ENCODE measurements at regions of chr4 and their contacts with region 1.

Region 1: GRCh38 chr4:76526585-76526990 is 91.6 kb downstream of the SHROOM3 start:
- DNase-seq: no peak
- ATAC-seq: peak; percentile 71 to 96 (median 93)
- H3K4me3 ChIP-seq: no peak overlapping the region
- H3K27ac ChIP-seq: peak overlapping the region in 9 of 10 donors; percentile 60 to 79 (median 74)
- H3K4me1 ChIP-seq: peaks cover 0 to 30% (median 6%) of the 10 kb centered on the region in 9 donors
- H3K27me3 ChIP-seq: no peaks in the 10 kb centered on the region
- CTCF ChIP-seq: no peak

Region 2: DNA sequence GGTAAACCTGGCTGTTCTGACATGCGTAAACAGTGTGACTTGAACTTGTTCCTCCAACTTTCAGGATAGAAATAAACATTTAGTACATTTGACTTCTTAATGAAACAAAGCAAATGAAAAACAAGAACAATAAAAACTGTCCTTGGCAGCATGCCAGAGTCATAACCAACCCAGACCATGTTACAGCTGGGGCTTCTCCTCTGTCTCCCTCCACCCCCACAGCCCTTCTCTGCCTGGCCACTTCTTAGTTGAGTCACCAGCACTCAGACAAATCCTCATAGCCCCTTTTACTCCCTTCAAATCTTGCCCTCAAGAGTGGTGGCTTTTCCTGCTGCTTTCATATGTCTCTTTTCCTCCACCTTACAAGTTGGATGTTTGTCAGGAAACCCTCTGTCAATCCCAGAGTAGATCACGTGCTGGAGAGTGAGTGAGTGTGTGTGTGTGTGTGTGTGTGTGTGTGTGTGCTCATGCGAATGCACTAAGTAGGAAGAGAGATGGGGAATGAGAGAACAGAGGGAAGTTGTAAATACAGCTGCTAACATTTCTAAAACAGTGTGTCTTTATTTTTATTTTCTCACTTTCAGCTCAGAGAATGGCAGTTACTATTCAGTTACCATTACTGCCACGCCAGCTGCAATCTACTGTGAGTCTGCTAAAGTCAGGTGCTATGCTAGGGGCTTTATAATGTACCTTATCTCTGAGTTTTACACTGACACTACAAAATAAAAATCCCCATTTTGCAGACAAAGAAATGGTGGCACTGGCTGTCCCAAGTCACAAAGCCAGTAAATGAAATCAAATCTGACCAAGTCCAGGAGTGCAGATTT is 328.0 kb before region 1 on chr4:
- intact Hi-C with region 1: no loop called
- DNase-seq: peak in 1 of 2 donors; percentile 79
- ATAC-seq: peak; percentile 55 to 81 (median 78)
- H3K4me3 ChIP-seq: peak overlapping the region in 1 of 10 donors; percentile 2
- H3K27ac ChIP-seq: peak overlapping the region; percentile 30 to 89 (median 70)
- H3K4me1 ChIP-seq: peaks cover 17 to 100% (median 92%) of the 10 kb centered on the region in 9 donors
- H3K27me3 ChIP-seq: no peaks in the 10 kb centered on the region
- CTCF ChIP-seq: no peak

Region 3: DNA sequence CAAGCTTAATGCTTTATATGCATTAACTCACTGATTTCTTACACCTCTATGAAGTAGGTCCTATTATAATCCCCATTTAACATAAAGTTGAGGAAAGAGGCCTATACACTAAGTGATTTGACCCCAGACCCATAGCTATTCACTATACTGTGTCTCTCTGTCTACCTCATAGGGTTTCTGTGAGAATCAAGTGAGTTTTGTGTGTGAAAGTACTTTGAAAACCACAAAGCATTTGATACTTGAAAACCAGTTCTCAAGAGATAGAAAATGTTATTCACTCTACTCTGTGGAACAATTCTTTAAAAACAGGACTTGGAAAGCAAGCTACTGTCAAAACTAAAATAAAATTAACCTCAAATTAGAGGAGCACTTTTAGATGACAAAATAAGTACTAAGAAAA is 56.5 kb before region 1 on chr4:
- intact Hi-C with region 1: no loop called
- DNase-seq: no peak
- ATAC-seq: no peak
- H3K4me3 ChIP-seq: no peak overlapping the region
- H3K27ac ChIP-seq: no peak overlapping the region
- H3K4me1 ChIP-seq: no peaks in the 10 kb centered on the region
- H3K27me3 ChIP-seq: no peaks in the 10 kb centered on the region
- CTCF ChIP-seq: no peak

Region 4: DNA sequence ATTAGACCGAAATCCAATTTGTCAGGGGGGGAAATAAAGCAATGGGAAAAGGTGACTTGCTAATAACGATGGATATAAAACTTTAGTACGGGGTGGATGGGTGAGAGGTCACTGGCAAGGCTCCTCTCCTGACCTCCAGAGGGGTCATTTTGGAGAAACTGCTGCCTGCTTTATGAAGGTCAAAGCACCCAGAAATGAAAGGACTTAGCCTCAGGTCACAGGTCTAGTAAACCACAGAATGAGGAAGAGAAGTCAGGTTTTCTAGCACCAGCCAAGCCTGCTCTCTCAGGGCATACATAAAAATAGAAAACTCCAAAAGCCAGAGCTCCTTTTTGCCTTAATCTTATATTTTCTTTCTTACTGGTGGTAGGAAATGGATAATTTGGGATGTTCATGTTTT is 42.6 kb after region 1 on chr4:
- intact Hi-C with region 1: loop called in 1 of 10 experiments (anchors 2 kb)
- DNase-seq: no peak
- ATAC-seq: no peak
- H3K4me3 ChIP-seq: no peak overlapping the region
- H3K27ac ChIP-seq: no peak overlapping the region
- H3K4me1 ChIP-seq: peaks cover 0 to 33% (median 4%) of the 10 kb centered on the region in 9 donors
- H3K27me3 ChIP-seq: no peaks in the 10 kb centered on the region
- CTCF ChIP-seq: no peak

Region 5: GRCh38 chr4:76579610-76580375 is 53.2 kb after region 1 on chr4:
- intact Hi-C with region 1: loop called in 2 of 10 experiments (anchors 5 to 10 kb)
- DNase-seq: no peak
- ATAC-seq: no peak
- H3K4me3 ChIP-seq: no peak overlapping the region
- H3K27ac ChIP-seq: no peak overlapping the region
- H3K4me1 ChIP-seq: peaks cover 0 to 5% (median 0%) of the 10 kb centered on the region in 9 donors
- H3K27me3 ChIP-seq: peaks cover 0 to 7% (median 0%) of the 10 kb centered on the region in 7 donors
- CTCF ChIP-seq: no peak

Region 6: GRCh38 chr4:76585897-76586360 is 59.3 kb after region 1 on chr4:
- intact Hi-C with region 1: loop called in 2 of 10 experiments (anchors 5 to 10 kb)
- DNase-seq: peak; percentile 74 to 77
- ATAC-seq: peak; percentile 68 to 93 (median 89)
- H3K4me3 ChIP-seq: peak overlapping the region in 9 of 10 donors; percentile 27 to 56 (median 51)
- H3K27ac ChIP-seq: peak overlapping the region; percentile 55 to 88 (median 76)
- H3K4me1 ChIP-seq: peaks cover 0 to 41% (median 16%) of the 10 kb centered on the region in 9 donors
- H3K27me3 ChIP-seq: peaks cover 0 to 36% (median 0%) of the 10 kb centered on the region in 7 donors
- CTCF ChIP-seq: peak in 7 of 9 donors; percentile 19 to 54 (median 38)

Region 7: GRCh38 chr4:76658231-76659102 is 131.9 kb after region 1 on chr4:
- intact Hi-C with region 1: loop called in 1 of 10 experiments (anchors 10 kb)
- DNase-seq: no peak
- ATAC-seq: no peak
- H3K4me3 ChIP-seq: no peak overlapping the region
- H3K27ac ChIP-seq: peak overlapping the region in 2 of 10 donors; percentile 7 to 9
- H3K4me1 ChIP-seq: peaks cover 0 to 28% (median 13%) of the 10 kb centered on the region in 9 donors
- H3K27me3 ChIP-seq: no peaks in the 10 kb centered on the region
- CTCF ChIP-seq: no peak

Measured in heart right ventricle (tissue), 16 donors.